Activated CD4-positive, alpha-beta T cell treated with anti-CD3 and anti-CD28 coated beads for 36 hours (primary cell): ENCODE measurements at regions of chr3 and their contacts with region 1.

Region 1: GRCh38 chr3:98022978-98023820 is 11.9 kb downstream of the GABRR3 start:
- DNase-seq: peak; percentile 96
- ATAC-seq: peak; percentile 87
- H3K4me3 Mint-ChIP-seq: no peak overlapping the region
- H3K27ac Mint-ChIP-seq: peak overlapping the region; percentile 11
- H3K4me1 Mint-ChIP-seq: peaks cover 4% of the 10 kb centered on the region
- H3K27me3 Mint-ChIP-seq: no peaks in the 10 kb centered on the region

Region 2: GRCh38 chr3:97719156-97719821 is 303.9 kb before region 1 on chr3:
- CTCF ChIA-PET with region 1: interaction called, 4 read pairs
- POLR2A ChIA-PET with region 1: no interaction called
- intact Hi-C with region 1: loop called in 1 of 2 experiments (anchors 2 kb)
- DNase-seq: peak; percentile 80
- ATAC-seq: peak; percentile 72
- H3K4me3 Mint-ChIP-seq: no peak overlapping the region
- H3K27ac Mint-ChIP-seq: no peak overlapping the region
- H3K4me1 Mint-ChIP-seq: no peaks in the 10 kb centered on the region
- H3K27me3 Mint-ChIP-seq: peaks cover 2% of the 10 kb centered on the region

Region 3: DNA sequence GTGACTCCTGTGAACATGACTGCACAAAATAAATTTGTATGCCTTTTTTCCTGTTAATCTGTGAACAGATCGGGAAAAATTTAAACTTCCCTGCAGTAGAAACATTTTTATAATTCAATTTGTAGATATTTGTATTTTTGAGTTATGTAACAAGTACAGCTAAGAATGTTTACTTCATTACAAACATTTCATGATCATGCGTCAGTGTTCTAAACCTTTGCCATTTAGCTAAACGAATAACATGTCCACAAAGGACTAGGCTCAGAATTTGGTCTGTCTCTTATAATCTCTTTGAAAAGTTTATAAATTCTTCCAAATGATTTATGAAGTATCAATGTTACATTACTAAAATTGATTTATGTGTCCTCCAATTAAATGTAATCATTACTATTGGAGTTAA is 218.7 kb before region 1 on chr3:
- CTCF ChIA-PET with region 1: interaction called, 20 read pairs
- POLR2A ChIA-PET with region 1: no interaction called
- intact Hi-C with region 1: no loop called
- DNase-seq: no peak
- ATAC-seq: no peak
- H3K4me3 Mint-ChIP-seq: no peak overlapping the region
- H3K27ac Mint-ChIP-seq: no peak overlapping the region
- H3K4me1 Mint-ChIP-seq: no peaks in the 10 kb centered on the region
- H3K27me3 Mint-ChIP-seq: no peaks in the 10 kb centered on the region

Region 4: GRCh38 chr3:97830638-97831037 is 192.6 kb before region 1 on chr3:
- CTCF ChIA-PET with region 1: no interaction called
- POLR2A ChIA-PET with region 1: no interaction called
- intact Hi-C with region 1: no loop called
- DNase-seq: no peak
- ATAC-seq: no peak
- H3K4me3 Mint-ChIP-seq: no peak overlapping the region
- H3K27ac Mint-ChIP-seq: no peak overlapping the region
- H3K4me1 Mint-ChIP-seq: no peaks in the 10 kb centered on the region
- H3K27me3 Mint-ChIP-seq: no peaks in the 10 kb centered on the region

Region 5: GRCh38 chr3:97940034-97940433 is 83.2 kb before region 1 on chr3:
- CTCF ChIA-PET with region 1: interaction called, 6 read pairs
- POLR2A ChIA-PET with region 1: no interaction called
- intact Hi-C with region 1: loop called in 1 of 2 experiments (anchors 10 kb)
- DNase-seq: no peak
- ATAC-seq: no peak
- H3K4me3 Mint-ChIP-seq: no peak overlapping the region
- H3K27ac Mint-ChIP-seq: no peak overlapping the region
- H3K4me1 Mint-ChIP-seq: peaks cover 19% of the 10 kb centered on the region
- H3K27me3 Mint-ChIP-seq: no peaks in the 10 kb centered on the region

Region 6: DNA sequence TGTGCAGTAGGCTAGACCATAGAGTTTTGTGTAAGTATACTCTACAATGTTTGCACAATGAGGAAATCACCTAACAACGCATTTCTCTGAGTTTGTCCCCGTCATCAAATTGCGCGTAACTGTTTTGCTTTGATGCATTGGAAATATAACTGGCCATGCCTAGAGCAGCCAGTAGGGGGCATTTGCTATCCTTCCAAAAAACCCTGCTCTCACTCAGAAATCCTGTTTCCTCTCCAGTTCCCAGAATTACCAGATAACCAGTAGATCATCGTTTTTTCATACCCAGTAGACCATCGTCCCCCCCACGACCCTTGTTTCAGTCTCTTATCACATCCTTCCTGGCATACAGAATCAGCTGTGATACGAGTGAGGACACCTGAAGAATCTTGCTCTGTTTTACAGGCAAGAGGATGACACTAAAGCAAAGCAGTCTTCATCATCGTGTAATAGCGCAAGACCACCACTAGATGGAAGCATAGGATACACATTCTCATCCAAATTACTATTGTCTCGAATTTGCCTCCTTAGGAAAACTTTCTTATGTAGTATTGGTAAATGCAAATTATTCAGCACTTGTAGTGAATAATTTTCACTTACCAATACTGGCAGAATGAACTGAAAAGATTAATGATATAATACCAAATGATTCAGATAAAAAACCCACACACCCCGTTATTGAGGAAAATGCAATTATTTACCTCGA is 16.3 kb after region 1 on chr3:
- CTCF ChIA-PET with region 1: interaction called, 29 read pairs
- POLR2A ChIA-PET with region 1: no interaction called
- intact Hi-C with region 1: no loop called
- DNase-seq: peak; percentile 84
- ATAC-seq: peak; percentile 88
- H3K4me3 Mint-ChIP-seq: peak overlapping the region; percentile 76
- H3K27ac Mint-ChIP-seq: peak overlapping the region; percentile 97
- H3K4me1 Mint-ChIP-seq: peaks cover 12% of the 10 kb centered on the region
- H3K27me3 Mint-ChIP-seq: peaks cover 4% of the 10 kb centered on the region

Region 7: DNA sequence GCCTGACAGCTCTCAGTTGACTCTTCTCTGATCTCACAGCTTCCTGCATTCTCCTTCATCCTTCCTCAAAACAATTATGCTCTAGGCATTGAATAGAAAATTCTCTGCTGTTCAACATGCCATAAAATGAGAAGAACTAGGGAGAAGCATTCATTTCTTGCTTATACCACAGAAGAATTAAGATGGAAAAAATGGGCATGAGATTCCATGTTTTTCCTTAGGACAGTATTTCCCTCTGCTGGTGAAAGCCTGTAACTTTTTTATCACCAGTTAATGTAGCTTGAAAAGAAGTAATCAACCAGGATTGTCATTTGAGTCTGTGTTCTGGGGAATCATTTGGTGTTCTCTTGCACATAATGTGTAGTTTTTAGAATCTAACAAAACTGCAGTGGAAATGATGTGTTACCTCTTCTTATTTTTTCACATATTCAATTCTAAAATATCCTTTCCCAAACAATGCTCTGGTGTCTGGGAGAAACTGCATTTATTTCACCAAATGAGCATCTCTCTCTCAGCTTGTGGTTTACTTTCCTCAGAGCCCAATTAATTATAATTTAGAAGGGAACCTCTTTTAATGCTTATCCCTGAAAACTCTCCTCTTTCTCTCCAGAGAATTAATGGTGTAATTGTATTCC is 971.0 kb after region 1 on chr3:
- CTCF ChIA-PET with region 1: no interaction called
- POLR2A ChIA-PET with region 1: no interaction called
- intact Hi-C with region 1: no loop called
- DNase-seq: no peak
- ATAC-seq: no peak
- H3K4me3 Mint-ChIP-seq: no peak overlapping the region
- H3K27ac Mint-ChIP-seq: no peak overlapping the region
- H3K4me1 Mint-ChIP-seq: no peaks in the 10 kb centered on the region
- H3K27me3 Mint-ChIP-seq: peaks cover 3% of the 10 kb centered on the region